ENCODE measurements at regions of chr3 and their contacts with region 1.

Region 1: GRCh38 chr3:36591959-36592358 is 172.4 kb downstream of the DCLK3 start:
- DNase-seq: peak in 1 of 2 experiments; percentile 6
- ATAC-seq: 0 out of 6 replicates have a peak, but pooled peaks of 1 of the 2 experiments have one; percentile 37
- H3K4me3 ChIP-seq: no peak overlapping the region
- H3K27ac ChIP-seq: no peak overlapping the region
- H3K4me1 ChIP-seq: no peaks in the 10 kb centered on the region
- CTCF ChIP-seq: peak; percentile 18; the same call in 2 of the 3 replicates
- EP300 ChIP-seq: no peak
- POLR2A ChIP-seq: no peak
- RAD21 ChIP-seq: peak; percentile 24 to 52; a peak in 3 of 5 replicates

Region 2: DNA sequence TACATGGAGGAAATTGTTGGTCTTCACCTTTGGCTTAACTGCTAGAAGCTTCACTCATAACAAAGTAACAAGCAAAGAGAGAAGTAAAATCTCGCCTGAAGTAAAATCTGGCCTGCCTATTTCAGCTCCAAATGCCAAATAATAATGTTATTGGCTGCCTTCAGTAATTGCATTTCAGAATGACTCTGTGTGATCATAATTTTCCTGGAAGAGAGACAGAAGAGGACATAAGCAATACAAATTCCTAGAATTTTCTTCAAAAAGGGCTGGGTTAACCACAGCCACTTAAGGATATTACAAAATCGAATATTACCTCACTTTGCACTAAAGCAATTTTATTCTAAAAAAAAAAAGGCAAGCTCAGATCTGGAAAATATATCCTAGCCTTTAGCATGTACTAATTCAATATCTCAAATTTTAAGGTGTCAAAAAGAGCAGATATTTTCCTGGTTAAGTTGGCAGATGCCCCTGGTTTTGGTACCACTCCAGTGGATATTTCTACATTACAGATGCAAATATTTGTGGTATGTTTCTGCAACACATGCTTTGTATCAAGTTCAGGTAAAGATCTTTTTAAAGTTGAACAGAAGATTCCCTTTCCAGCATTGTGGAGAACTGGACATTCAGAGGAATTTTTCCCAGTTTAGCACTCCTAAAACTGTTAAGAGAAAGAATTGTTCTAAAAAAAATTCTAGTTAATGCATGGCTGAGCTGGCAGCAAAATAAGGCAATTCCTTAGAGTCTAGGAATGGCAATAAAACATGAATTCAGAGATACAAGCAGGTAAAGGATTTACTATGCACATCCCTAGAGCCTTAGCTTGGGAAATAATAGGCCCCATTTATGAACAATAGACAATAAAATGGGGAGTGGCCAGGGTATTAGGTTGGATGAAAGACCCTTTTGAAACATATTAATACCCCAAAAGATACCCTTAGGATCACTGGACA is 95.0 kb before region 1 on chr3:
- CTCF ChIA-PET with region 1: no interaction called
- POLR2A ChIA-PET with region 1: no interaction called
- DNase-seq: no peak
- ATAC-seq: no peak
- H3K4me3 ChIP-seq: no peak overlapping the region
- H3K27ac ChIP-seq: no peak overlapping the region
- H3K4me1 ChIP-seq: peaks cover 11% of the 10 kb centered on the region; the same call in 1 of the 3 replicates
- CTCF ChIP-seq: no peak
- EP300 ChIP-seq: no peak
- POLR2A ChIP-seq: no peak
- RAD21 ChIP-seq: no peak

Region 3: GRCh38 chr3:36700537-36701248 is 108.7 kb after region 1 on chr3:
- CTCF ChIA-PET with region 1: interaction called, 10 read pairs
- POLR2A ChIA-PET with region 1: no interaction called
- DNase-seq: peak; percentile 47 to 72
- ATAC-seq: peak; percentile 87 to 93
- H3K4me3 ChIP-seq: no peak overlapping the region
- H3K27ac ChIP-seq: peak overlapping the region in 1 of 2 experiments; percentile 49; a peak in 1 of 6 replicates
- H3K4me1 ChIP-seq: peaks cover 13% of the 10 kb centered on the region
- CTCF ChIP-seq: peak; percentile 93
- EP300 ChIP-seq: no peak
- POLR2A ChIP-seq: no peak
- RAD21 ChIP-seq: peak; percentile 99

Measured in A549 (cell line).